ENCODE measurements at regions of chr1 and their contacts with region 1.

Region 1: DNA sequence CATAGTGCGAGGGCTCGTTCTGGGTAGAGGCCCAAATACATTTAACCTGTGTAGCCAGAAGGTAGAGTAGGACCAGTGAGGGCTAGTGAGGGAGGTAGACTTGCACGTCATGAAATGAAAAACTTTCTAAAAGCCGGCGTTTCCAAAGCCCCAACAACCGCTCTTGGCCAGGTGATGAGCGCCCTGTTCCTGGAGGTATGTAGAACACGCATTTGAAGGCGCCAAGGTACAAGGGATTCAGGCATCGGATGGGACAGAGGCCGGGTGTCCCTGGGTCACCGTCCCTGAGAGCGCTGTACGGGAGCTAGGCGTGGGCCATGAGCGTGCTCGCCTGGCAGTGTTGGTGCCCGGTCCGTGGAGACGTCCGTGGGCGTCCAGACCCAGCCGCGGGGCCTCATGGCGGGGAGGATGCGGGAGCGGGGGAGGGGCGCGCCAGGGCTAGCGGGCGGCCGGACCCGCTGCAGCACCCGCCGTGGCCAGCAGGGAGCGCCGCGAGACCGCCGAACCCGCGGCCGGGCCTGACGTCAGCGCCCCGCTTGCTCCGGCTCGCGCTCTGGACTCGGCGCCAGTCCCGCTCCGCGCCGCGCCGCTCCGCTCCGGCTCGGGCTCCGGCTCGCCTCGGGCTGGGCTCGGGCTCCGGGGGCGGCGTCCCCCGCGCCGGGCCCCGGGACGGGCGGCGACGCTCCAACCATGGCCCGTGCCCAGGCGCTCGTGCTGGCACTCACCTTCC is at the start of gene PTPRU:
- DNase-seq: peak; percentile 88
- ATAC-seq: peak; percentile 95
- H3K4me3 ChIP-seq: peak within 1 kb of the TSS; percentile 36 to 65 (median 52)
- H3K4me3 Mint-ChIP-seq: peak within 1 kb of the TSS; percentile 96
- H3K27ac ChIP-seq: no peak within 1 kb of the TSS
- H3K27ac Mint-ChIP-seq: peak within 1 kb of the TSS; percentile 70
- H3K4me1 ChIP-seq: peaks cover 24% of the 10 kb centered on the region in 2 donors
- H3K4me1 Mint-ChIP-seq: peaks cover 23% of the 10 kb centered on the region
- H3K27me3 ChIP-seq: peaks cover 0 to 43% (median 24%) of the 10 kb centered on the region in 4 experiments
- H3K27me3 Mint-ChIP-seq: peaks cover 56% of the 10 kb centered on the region
- CTCF ChIP-seq: peak; percentile 77
- total RNA-seq, gene PTPRU: 0.15 and 0.25 TPM in 2 replicates

Region 2: DNA sequence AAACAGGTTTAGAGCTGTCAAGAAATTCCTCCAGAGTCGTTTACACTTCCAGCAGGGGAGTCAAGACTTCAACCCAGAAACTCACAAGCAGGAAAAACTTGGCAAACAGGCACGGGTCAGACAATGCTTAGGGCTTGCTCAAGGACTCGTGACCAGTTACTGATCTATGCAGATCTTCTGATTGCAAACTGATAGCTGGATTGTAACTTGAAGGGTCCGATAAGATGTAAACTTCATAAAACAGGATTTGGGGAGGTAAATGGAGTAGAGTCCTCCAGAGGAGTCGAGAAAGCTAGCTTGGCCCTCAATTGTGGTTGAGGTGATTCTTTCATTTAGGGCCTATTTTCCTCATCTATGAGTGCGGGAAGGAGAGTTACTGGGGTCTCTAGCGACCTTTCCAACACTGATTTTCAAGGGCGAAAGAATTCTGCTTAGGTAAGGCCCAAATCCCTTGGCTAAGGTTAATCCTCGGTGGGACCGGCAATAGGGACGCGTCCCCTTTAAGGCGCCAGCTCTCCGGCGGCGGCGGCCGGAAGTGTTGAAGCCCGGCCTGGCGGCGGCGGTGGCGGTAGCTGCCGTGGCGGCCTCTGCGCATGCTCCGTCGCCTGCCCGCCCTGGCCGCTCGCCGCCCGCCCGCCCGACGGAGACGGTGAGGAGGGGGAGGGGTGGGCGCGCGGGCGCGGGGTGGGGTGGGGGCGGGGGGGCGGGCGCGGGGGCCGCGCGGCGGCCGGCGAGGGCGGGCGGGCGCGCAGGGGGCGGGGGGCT is 567.7 kb before region 1 on chr1 and contains the start of gene GMEB1:
- CTCF ChIA-PET with region 1: no interaction called
- POLR2A ChIA-PET with region 1: no interaction called
- intact Hi-C with region 1: no loop called
- DNase-seq: peak; percentile 88
- ATAC-seq: peak; percentile 65
- H3K4me3 ChIP-seq: peak within 1 kb of the TSS; percentile 68 to 95 (median 94)
- H3K4me3 Mint-ChIP-seq: peak within 1 kb of the TSS; percentile 94
- H3K27ac ChIP-seq: peak within 1 kb of the TSS; percentile 95 to 98
- H3K27ac Mint-ChIP-seq: peak within 1 kb of the TSS; percentile 99
- H3K4me1 ChIP-seq: peaks cover 5 to 24% of the 10 kb centered on the region in 2 donors
- H3K4me1 Mint-ChIP-seq: peaks cover 19% of the 10 kb centered on the region
- H3K27me3 ChIP-seq: no peaks in the 10 kb centered on the region
- H3K27me3 Mint-ChIP-seq: no peaks in the 10 kb centered on the region
- CTCF ChIP-seq: no peak
- total RNA-seq, gene GMEB1: 21.7 and 24.8 TPM in 2 replicates

Region 3: GRCh38 chr1:29225361-29225760 is 10.8 kb before region 1 on chr1:
- CTCF ChIA-PET with region 1: no interaction called
- POLR2A ChIA-PET with region 1: no interaction called
- intact Hi-C with region 1: no loop called
- DNase-seq: no peak
- ATAC-seq: no peak
- H3K4me3 ChIP-seq: no peak overlapping the region
- H3K4me3 Mint-ChIP-seq: no peak overlapping the region
- H3K27ac ChIP-seq: no peak overlapping the region
- H3K27ac Mint-ChIP-seq: no peak overlapping the region
- H3K4me1 ChIP-seq: peaks cover 7% of the 10 kb centered on the region in 2 donors
- H3K4me1 Mint-ChIP-seq: peaks cover 7% of the 10 kb centered on the region
- H3K27me3 ChIP-seq: no peaks in the 10 kb centered on the region
- H3K27me3 Mint-ChIP-seq: no peaks in the 10 kb centered on the region
- CTCF ChIP-seq: no peak

Region 4: DNA sequence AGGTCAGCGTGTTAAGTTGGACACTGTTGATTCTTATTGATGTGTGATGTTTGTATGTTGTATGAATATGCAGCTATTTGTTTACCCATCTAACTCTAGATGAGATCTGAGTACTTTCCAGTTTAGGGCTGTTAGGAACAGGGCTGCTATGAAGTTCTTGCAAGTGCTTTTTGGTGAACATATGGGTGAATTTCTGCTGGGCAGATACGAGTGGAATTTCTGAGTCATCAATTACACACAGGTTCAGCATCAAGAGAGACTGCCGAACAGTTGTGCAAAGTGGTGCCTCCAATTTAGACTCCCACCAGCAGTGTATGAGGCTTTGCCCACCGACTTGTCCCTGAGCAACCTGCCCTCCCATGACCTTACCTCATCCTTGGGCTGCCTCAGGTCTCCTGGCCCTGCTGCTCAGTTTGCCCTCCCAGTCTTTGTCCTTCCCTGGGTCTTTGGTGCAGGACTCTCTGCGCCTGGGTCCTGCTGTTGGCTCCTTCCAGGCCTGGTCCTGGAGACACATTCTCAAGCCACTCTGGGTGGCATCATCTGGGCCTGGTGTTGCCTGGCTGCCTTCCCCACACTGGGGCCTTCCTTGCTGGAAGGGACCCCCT is 343.8 kb after region 1 on chr1:
- CTCF ChIA-PET with region 1: no interaction called
- POLR2A ChIA-PET with region 1: no interaction called
- intact Hi-C with region 1: no loop called
- DNase-seq: no peak
- ATAC-seq: no peak
- H3K4me3 ChIP-seq: no peak overlapping the region
- H3K4me3 Mint-ChIP-seq: no peak overlapping the region
- H3K27ac ChIP-seq: no peak overlapping the region
- H3K27ac Mint-ChIP-seq: no peak overlapping the region
- H3K4me1 ChIP-seq: no peaks in the 10 kb centered on the region
- H3K4me1 Mint-ChIP-seq: no peaks in the 10 kb centered on the region
- H3K27me3 ChIP-seq: peaks cover 0 to 4% (median 0%) of the 10 kb centered on the region in 4 experiments
- H3K27me3 Mint-ChIP-seq: peaks cover 4% of the 10 kb centered on the region
- CTCF ChIP-seq: no peak

Region 5: GRCh38 chr1:30379684-30380624 is 1143.8 kb after region 1 on chr1:
- CTCF ChIA-PET with region 1: interaction called, 50 read pairs
- POLR2A ChIA-PET with region 1: no interaction called
- intact Hi-C with region 1: no loop called
- DNase-seq: peak; percentile 75
- ATAC-seq: peak; percentile 51
- H3K4me3 ChIP-seq: no peak overlapping the region
- H3K4me3 Mint-ChIP-seq: no peak overlapping the region
- H3K27ac ChIP-seq: no peak overlapping the region
- H3K27ac Mint-ChIP-seq: no peak overlapping the region
- H3K4me1 ChIP-seq: no peaks in the 10 kb centered on the region
- H3K4me1 Mint-ChIP-seq: peaks cover 4% of the 10 kb centered on the region
- H3K27me3 ChIP-seq: peaks cover 0 to 3% (median 1%) of the 10 kb centered on the region in 4 experiments
- H3K27me3 Mint-ChIP-seq: peaks cover 30% of the 10 kb centered on the region
- CTCF ChIP-seq: peak; percentile 90

Region 6: DNA sequence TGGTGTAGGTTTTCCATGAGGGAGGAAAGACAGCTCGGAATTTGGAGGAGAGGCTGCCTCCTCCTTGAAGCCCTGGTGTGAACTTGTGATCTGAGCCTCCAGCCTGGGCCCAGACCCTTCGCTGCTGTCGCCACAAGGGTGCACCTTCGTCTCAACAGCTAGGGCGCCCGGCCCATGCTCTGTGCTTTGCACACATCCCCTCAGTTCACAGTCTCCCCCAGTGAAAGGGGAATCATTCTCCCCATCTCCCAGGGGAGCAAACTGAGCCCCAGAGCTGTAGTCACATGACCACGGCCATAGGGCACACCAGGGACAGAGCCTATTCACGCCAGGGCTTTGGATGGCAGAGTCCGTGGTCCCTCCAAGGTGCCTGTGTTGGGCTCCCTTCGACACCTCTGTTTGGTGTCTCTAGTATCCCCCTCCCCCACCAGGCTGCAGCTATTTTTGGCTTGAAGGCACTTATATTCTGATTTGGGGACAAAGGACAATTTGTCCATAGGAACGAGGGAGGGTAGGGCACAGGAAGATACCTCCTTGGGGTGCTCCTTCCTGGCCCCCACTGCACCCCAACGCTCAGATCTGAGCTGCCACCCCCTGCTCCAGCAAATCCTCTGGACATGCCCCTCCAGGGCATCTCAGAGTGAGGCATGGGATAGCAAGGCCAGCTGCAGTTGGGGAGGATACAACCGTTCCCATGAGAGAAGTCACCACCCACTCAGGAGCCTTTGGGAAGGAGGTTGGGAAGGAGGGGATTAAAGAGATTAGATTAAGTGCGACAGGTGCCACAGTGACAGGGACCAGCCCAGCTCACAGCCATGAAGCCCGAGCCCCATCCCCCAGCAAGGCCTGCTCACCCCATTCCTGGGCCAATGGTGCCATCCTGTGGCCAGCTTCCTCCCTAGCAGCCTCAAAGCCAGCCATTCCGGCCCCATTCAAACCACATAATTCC is 1471.6 kb after region 1 on chr1:
- CTCF ChIA-PET with region 1: interaction called, 7 read pairs
- POLR2A ChIA-PET with region 1: no interaction called
- intact Hi-C with region 1: loop called (anchors 1 kb)
- DNase-seq: peak; percentile 70
- ATAC-seq: peak; percentile 97
- H3K4me3 ChIP-seq: no peak overlapping the region
- H3K4me3 Mint-ChIP-seq: no peak overlapping the region
- H3K27ac ChIP-seq: no peak overlapping the region
- H3K27ac Mint-ChIP-seq: no peak overlapping the region
- H3K4me1 ChIP-seq: peaks cover 0 to 6% of the 10 kb centered on the region in 2 donors
- H3K4me1 Mint-ChIP-seq: peaks cover 4% of the 10 kb centered on the region
- H3K27me3 ChIP-seq: peaks cover 0 to 23% (median 3%) of the 10 kb centered on the region in 4 experiments
- H3K27me3 Mint-ChIP-seq: peaks cover 27% of the 10 kb centered on the region
- CTCF ChIP-seq: peak; percentile 77